ENCODE measurements at regions of chr22 and their contacts with region 1.

Region 1: DNA sequence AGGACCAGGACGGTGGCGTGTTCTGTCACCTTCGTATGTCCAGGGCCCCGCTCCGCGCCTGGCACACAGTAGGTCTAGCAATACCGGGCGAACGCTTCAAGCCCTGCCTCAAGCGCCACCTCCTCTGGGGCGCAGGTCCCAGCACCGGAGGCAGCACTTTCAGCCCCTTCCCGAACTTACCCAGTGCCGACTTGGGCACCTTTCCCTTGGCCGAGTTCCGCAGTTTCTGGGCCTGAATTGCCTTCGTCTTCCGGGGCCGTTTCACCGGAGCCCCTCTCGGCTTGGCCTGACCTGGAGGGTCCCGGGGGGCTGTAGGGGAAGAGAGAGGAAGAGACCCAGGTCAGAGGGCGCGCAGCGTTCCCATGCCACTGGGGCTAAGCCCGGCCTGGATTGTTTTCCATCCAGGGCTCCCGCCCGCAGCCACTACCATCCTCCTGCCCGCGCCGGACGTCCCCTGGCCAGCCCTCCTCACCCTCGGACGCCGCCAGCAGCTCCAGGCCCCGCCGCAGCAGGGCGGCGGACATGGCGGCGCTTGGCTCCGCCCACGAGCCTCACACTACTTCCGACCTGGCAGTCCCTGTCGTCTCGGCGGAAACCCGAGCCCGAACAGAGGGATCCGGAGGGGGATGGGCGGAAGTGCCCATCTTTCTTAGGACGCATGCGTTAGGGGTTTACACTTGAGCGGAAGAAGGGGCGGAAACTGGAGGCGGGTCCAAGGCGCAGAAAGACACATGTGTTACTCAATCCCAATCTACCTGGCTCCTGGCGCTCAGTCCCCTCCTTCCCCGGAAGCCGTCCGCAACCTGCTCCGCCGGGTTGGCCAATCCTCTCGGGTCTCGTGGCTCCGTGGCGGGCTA is at the start of gene RPS19BP1:
- DNase-seq: peak; percentile 100
- H3K4me3 ChIP-seq: peak within 1 kb of the TSS; percentile 87
- H3K27ac ChIP-seq: peak within 1 kb of the TSS; percentile 93
- H3K4me1 ChIP-seq: peaks cover 48% of the 10 kb centered on the region
- H3K27me3 ChIP-seq: no peaks in the 10 kb centered on the region
- CTCF ChIP-seq: no peak
- total RNA-seq, gene RPS19BP1: 93.5 and 97.2 TPM in 2 replicates

Region 2: GRCh38 chr22:39319270-39320022 is 213.0 kb before region 1 on chr22 and contains the start of gene RPL3:
- CTCF ChIA-PET with region 1: interaction called, 3 read pairs
- POLR2A ChIA-PET with region 1: interaction called, 5 read pairs
- intact Hi-C with region 1: loop called (anchors 5 kb)
- DNase-seq: peak; percentile 100
- H3K4me3 ChIP-seq: peak within 1 kb of the TSS; percentile 87
- H3K27ac ChIP-seq: peak within 1 kb of the TSS; percentile 98
- H3K4me1 ChIP-seq: peaks cover 30% of the 10 kb centered on the region
- H3K27me3 ChIP-seq: no peaks in the 10 kb centered on the region
- CTCF ChIP-seq: 0 out of 2 replicates have a peak, but pooled peaks have one; percentile 18
- total RNA-seq, gene RPL3: 1,117 and 1,141 TPM in 2 replicates

Region 3: DNA sequence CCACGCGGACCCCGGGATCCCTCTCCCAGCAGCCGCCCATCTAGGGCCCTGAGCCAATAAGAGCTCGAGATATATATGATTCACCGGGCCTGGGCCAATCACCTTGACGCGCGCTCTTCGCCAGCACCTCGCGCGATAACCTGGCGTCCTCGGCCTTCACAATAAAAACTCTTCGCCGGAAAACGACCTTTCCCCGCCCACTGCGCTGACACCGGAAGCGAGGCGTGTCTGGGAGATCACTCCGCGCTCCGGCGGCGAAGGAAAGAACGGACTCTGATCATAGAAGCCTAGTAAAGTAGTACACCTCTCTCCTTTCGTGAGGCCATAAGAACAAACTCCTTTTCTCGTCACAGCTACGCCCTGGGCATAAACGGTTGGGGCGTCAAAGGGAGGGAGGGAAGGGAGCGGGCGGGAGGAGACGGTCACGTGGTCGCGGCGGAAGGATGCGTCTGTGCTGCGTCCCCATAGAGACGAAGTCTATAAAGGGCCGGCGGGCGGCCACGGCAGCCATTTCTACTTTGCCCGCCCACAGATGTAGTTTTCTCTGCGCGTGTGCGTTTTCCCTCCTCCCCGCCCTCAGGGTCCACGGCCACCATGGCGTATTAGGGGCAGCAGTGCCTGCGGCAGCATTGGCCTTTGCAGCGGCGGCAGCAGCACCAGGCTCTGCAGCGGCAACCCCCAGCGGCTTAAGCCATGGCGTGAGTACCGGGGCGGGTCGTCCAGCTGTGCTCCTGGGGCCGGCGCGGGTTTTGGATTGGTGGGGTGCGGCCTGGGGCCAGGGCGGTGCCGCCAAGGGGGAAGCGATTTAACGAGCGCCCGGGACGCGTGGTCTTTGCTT is 12.2 kb before region 1 on chr22 and contains the start of gene ATF4:
- CTCF ChIA-PET with region 1: interaction called, 10 read pairs
- POLR2A ChIA-PET with region 1: no interaction called
- intact Hi-C with region 1: no loop called
- DNase-seq: peak; percentile 99
- H3K4me3 ChIP-seq: peak within 1 kb of the TSS; percentile 97
- H3K27ac ChIP-seq: peak within 1 kb of the TSS; percentile 99
- H3K4me1 ChIP-seq: peaks cover 20% of the 10 kb centered on the region
- H3K27me3 ChIP-seq: no peaks in the 10 kb centered on the region
- CTCF ChIP-seq: no peak
- total RNA-seq, gene ATF4: 476 and 573 TPM in 2 replicates

Region 4: DNA sequence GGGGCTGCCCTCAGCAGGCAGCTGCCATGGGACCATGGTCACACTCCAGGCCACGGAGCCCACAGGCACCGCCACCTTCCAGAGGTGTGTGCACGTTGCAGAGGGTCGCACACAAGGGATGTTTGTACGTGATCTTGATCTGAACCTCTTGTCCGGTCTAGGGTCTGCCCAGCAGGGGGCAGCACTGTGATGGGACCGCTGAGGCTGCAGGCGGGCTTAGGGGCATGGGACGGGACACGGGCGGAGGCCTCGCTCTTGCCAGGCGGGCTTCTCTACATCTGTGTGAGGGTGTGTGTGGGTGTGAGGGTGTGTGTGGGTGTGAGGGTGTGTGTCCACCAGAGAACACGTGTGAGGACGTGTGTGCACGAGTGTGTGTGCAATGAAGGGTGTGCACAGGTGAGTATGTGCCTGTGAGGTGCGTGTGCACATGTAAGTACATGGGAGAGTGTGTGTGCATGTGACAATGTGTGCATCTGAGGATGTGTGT is 90.5 kb after region 1 on chr22:
- CTCF ChIA-PET with region 1: no interaction called
- POLR2A ChIA-PET with region 1: no interaction called
- intact Hi-C with region 1: no loop called
- DNase-seq: peak; percentile 37
- H3K4me3 ChIP-seq: no peak overlapping the region
- H3K27ac ChIP-seq: no peak overlapping the region
- H3K4me1 ChIP-seq: no peaks in the 10 kb centered on the region
- H3K27me3 ChIP-seq: no peaks in the 10 kb centered on the region
- CTCF ChIP-seq: peak; percentile 67

Region 5: GRCh38 chr22:39839917-39840510 is 307.6 kb after region 1 on chr22:
- CTCF ChIA-PET with region 1: no interaction called
- POLR2A ChIA-PET with region 1: no interaction called
- intact Hi-C with region 1: no loop called
- DNase-seq: no peak
- H3K4me3 ChIP-seq: no peak overlapping the region
- H3K27ac ChIP-seq: no peak overlapping the region
- H3K4me1 ChIP-seq: no peaks in the 10 kb centered on the region
- H3K27me3 ChIP-seq: peaks cover 50% of the 10 kb centered on the region
- CTCF ChIP-seq: no peak

Region 6: GRCh38 chr22:39960791-39961746 is 428.6 kb after region 1 on chr22:
- CTCF ChIA-PET with region 1: no interaction called
- POLR2A ChIA-PET with region 1: no interaction called
- intact Hi-C with region 1: no loop called
- DNase-seq: no peak
- H3K4me3 ChIP-seq: no peak overlapping the region
- H3K27ac ChIP-seq: no peak overlapping the region
- H3K4me1 ChIP-seq: no peaks in the 10 kb centered on the region
- H3K27me3 ChIP-seq: peaks cover 4% of the 10 kb centered on the region
- CTCF ChIP-seq: no peak

Region 7: GRCh38 chr22:40024201-40025061 is 492.0 kb after region 1 on chr22:
- CTCF ChIA-PET with region 1: interaction called, 9 read pairs
- POLR2A ChIA-PET with region 1: no interaction called
- intact Hi-C with region 1: loop called (anchors 2 kb)
- DNase-seq: peak; percentile 81
- H3K4me3 ChIP-seq: no peak overlapping the region
- H3K27ac ChIP-seq: no peak overlapping the region
- H3K4me1 ChIP-seq: no peaks in the 10 kb centered on the region
- H3K27me3 ChIP-seq: no peaks in the 10 kb centered on the region
- CTCF ChIP-seq: peak; percentile 87

Region 8: DNA sequence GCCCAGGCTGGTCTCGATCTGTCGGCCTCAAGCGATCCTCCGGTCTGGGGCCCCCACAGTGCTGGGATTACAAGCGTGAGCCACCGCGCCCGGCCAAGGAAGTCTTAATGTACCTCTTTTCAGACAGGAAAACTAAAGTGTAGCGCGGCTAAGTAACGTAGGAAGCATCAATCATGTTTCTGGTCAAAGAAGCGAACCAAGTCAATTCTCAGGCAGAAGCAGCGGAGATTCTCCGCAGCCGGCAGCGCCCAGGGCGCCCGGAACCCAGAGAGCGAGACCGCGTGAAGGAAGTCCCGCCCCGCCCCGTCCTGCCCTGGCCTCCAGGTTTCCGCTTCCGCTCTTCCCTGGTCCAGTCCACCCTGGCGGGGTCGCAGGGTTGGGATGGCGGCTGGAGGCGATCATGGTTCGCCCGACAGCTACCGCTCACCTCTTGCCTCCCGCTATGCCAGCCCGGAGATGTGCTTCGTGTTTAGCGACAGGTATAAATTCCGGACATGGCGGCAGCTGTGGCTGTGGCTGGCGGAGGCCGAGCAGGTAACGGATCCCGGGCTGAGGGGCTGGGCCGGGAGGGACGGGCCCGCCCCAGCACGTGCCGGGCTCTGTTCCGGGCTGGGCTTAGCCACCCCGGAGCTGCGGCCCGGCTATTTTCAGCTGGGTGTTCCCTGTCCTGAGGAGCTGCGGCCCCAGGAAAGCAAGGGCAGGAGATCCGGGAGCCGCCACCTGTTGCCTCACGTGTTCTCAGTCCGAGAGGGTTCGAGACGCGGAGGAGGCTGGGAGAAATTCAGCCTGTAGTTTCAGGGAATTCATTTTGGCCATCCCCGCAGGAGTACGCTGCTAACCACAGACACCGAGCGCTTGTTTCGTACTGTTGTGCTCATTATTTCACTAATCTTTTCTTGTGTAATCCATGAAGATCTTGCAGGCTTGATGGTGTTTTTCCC is 814.0 kb after region 1 on chr22 and contains the start of gene ADSL:
- CTCF ChIA-PET with region 1: no interaction called
- POLR2A ChIA-PET with region 1: no interaction called
- intact Hi-C with region 1: loop called (anchors 10 kb)
- DNase-seq: peak; percentile 94
- H3K4me3 ChIP-seq: peak within 1 kb of the TSS; percentile 81
- H3K27ac ChIP-seq: peak within 1 kb of the TSS; percentile 86
- H3K4me1 ChIP-seq: peaks cover 13% of the 10 kb centered on the region
- H3K27me3 ChIP-seq: no peaks in the 10 kb centered on the region
- CTCF ChIP-seq: no peak
- total RNA-seq, gene ADSL: 133 and 144 TPM in 2 replicates

Measured in A673 (cell line).